AG04449 (cell line): ENCODE measurements at regions of chr10 and their contacts with region 1.

Region 1: GRCh38 chr10:130110246-130111112 is at the start of gene C10orf143:
- DNase-seq: peak; percentile 87
- H3K4me3 ChIP-seq: peak within 1 kb of the TSS; percentile 96
- CTCF ChIP-seq: no peak

Region 2: DNA sequence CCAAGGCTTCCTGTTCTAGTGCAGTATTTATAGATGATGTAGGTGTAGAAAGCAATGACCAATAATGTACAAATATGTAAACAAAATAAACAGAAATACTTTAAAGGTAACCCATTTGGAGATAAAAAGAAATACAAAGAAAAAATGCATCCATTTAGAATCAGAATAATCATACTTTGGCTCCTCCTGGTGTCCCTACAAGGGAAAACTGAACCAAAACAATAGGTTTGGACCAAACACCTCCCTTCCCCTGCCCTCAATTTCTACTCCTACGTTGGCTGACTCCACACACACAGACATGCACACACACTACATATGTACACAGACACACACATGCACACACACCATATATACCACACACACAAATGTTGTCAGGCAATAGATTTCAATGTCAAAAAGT is 35.8 kb before region 1 on chr10:
- CTCF ChIA-PET with region 1: no interaction called
- POLR2A ChIA-PET with region 1: no interaction called
- DNase-seq: no peak
- H3K4me3 ChIP-seq: no peak overlapping the region
- CTCF ChIP-seq: no peak

Region 3: GRCh38 chr10:130136226-130137089 is 26.0 kb after region 1 on chr10 and contains the start of gene GLRX3:
- CTCF ChIA-PET with region 1: interaction called, 30 read pairs
- POLR2A ChIA-PET with region 1: interaction called, 45 read pairs
- DNase-seq: no peak
- H3K4me3 ChIP-seq: peak within 1 kb of the TSS; percentile 76
- CTCF ChIP-seq: no peak

Region 4: GRCh38 chr10:130254662-130255061 is 144.2 kb after region 1 on chr10:
- CTCF ChIA-PET with region 1: no interaction called
- POLR2A ChIA-PET with region 1: no interaction called
- DNase-seq: no peak
- H3K4me3 ChIP-seq: no peak overlapping the region
- CTCF ChIP-seq: no peak